ENCODE measurements at regions of chr7 and their contacts with region 1.

Region 1: DNA sequence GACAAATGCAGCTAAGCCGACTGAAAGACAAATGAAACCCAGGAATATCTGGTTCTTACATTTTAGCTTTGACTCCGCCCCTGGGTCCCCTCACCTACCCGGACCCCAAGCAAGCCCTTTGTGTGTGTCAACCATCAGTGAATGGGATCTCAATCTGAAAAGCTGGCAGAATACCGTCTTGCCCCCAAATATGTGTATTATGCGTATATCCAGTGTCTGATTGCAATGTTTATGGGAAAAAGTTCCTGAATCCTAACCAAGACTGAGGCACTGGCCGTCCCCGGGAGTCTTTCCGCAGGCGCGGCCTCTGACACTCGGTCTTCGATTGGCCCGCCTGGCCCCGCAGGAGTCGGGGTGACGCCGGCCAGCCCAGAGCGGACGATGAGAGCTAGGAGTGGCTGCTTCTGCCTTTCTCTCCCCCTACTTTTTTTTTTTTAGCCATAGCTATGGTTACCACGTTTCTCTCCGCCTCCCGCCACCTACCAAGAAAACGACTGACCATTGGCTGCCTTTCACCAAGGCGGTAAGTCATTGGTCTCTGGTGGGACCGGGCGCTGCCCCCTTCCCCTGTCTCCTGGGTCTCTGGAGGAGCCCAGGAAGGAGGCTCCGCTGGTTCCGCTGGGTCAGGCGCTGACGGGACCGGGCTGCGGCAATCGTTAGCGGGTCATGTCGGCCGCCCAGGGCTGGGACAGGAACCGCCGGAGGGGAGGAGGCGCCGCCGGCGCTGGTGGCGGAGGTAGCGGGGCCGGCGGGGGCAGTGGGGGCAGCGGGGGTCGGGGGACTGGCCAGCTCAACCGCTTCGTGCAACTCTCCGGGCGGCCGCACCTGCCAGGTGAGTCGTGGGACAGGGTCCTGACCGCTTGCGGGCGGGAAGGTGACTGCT is at the start of gene KLHDC10:
- DNase-seq: peak; percentile 96
- H3K4me3 Mint-ChIP-seq: peak within 1 kb of the TSS; percentile 80
- H3K27ac Mint-ChIP-seq: peak within 1 kb of the TSS; percentile 92
- H3K4me1 Mint-ChIP-seq: peaks cover 27% of the 10 kb centered on the region
- H3K27me3 Mint-ChIP-seq: no peaks in the 10 kb centered on the region
- CTCF ChIP-seq: no peak
- total RNA-seq, gene KLHDC10: 28.5 and 35.3 TPM in 2 replicates

Region 2: DNA sequence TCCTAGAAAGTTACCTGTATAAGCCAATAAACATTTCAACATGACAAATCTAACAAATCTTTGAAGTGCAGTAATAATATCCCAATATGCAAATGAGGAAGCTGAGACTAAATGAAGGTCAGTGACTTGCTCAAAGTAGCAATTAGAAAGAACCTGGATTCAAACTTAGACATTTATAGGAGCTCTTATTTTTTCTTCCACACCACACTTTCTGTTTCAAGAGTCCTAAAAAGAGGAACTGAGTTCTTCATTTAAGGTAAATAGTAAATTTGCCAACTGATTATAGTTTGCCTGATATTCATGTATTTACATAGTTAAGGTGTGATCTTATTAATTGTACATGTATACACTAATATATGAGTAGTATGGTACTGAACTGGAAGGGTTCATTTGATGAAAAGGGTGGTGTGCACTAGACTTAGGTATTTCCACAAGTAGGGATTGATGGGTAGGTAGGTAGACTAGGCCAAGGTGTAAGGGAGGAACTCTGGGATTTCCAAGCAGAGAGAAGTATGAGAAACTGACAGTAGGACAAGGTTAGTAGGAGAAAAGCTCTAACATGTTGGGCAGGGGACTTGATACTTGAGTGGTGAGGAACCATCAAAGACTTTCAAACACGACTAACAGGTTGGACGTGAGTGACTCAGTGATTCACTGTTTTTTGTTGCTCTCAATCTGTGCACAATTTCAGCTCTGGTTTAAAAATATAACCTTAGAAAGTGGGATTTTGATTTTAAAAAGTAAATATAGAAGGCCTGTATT is 44.3 kb after region 1 on chr7:
- CTCF ChIA-PET with region 1: interaction called, 5 read pairs
- intact Hi-C with region 1: loop called (anchors 5 kb)
- DNase-seq: peak; percentile 28
- H3K4me3 Mint-ChIP-seq: peak overlapping the region; percentile 38
- H3K27ac Mint-ChIP-seq: peak overlapping the region; percentile 66
- H3K4me1 Mint-ChIP-seq: peaks cover 32% of the 10 kb centered on the region
- H3K27me3 Mint-ChIP-seq: no peaks in the 10 kb centered on the region
- CTCF ChIP-seq: no peak

Region 3: DNA sequence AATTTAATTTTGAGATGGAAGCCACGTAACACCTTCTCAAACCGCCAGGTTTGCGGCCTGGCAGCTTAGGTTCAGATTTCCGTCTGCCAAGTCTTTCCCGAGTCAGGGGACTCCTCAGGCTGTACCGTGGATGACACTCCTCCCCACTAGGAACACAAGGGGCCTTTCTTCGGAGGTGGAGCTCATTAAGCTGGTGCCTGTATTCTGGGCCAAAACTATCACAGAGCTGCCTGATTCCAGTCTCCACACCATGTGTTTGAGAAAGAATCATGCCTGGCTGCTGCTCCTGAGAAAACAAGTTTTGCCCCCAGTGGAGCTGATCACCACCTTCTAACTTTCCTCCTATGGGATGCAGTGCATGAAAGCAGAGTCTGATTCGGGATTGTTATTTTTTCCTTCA is 90.2 kb after region 1 on chr7:
- CTCF ChIA-PET with region 1: interaction called, 3 read pairs
- intact Hi-C with region 1: loop called (anchors 5 kb)
- DNase-seq: no peak
- H3K4me3 Mint-ChIP-seq: no peak overlapping the region
- H3K27ac Mint-ChIP-seq: no peak overlapping the region
- H3K4me1 Mint-ChIP-seq: no peaks in the 10 kb centered on the region
- H3K27me3 Mint-ChIP-seq: no peaks in the 10 kb centered on the region
- CTCF ChIP-seq: no peak

Region 4: GRCh38 chr7:130560970-130561369 is 490.8 kb after region 1 on chr7:
- CTCF ChIA-PET with region 1: interaction called, 4 read pairs
- intact Hi-C with region 1: loop called (anchors 1 kb)
- DNase-seq: peak; percentile 36
- H3K4me3 Mint-ChIP-seq: no peak overlapping the region
- H3K27ac Mint-ChIP-seq: no peak overlapping the region
- H3K4me1 Mint-ChIP-seq: no peaks in the 10 kb centered on the region
- H3K27me3 Mint-ChIP-seq: no peaks in the 10 kb centered on the region
- CTCF ChIP-seq: no peak

Measured in Calu3 (cell line).